WTC11 (cell line): ENCODE measurements at regions of chr2 and their contacts with region 1.

Region 1: GRCh38 chr2:100321181-100321865 is 978 bp downstream of the LONRF2 start:
- DNase-seq: peak; percentile 75
- ATAC-seq: peak; percentile 89
- H3K4me3 Mint-ChIP-seq: peak overlapping the region; percentile 55
- H3K27ac Mint-ChIP-seq: no peak overlapping the region
- H3K4me1 Mint-ChIP-seq: peaks cover 5% of the 10 kb centered on the region
- H3K27me3 Mint-ChIP-seq: peaks cover 61% of the 10 kb centered on the region
- CTCF ChIP-seq: no peak

Region 2: DNA sequence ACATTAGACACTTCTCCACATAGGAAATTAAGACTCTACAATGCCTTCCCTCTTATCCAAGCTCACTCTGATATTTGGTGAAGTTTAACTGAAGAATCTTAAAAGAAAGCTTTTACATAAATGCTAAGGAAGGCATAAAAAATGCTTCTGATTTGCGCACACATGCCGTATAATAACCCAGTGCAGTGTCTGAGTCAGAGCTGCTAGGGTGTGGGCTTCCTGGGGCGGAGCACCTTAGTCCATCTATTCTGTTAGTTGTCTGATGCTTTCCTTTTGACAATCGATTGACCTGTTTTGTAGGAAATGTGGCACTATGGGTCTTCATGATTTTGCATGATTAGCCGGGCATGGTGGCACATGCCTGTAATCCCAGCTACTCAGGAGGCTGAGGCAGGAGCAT is 410.4 kb before region 1 on chr2:
- CTCF ChIA-PET with region 1: no interaction called
- POLR2A ChIA-PET with region 1: interaction called, 10 read pairs
- DNase-seq: no peak
- ATAC-seq: no peak
- H3K4me3 Mint-ChIP-seq: no peak overlapping the region
- H3K27ac Mint-ChIP-seq: no peak overlapping the region
- H3K4me1 Mint-ChIP-seq: peaks cover 5% of the 10 kb centered on the region; the same call in 1 of the 2 replicates
- H3K27me3 Mint-ChIP-seq: no peaks in the 10 kb centered on the region
- CTCF ChIP-seq: no peak

Region 3: DNA sequence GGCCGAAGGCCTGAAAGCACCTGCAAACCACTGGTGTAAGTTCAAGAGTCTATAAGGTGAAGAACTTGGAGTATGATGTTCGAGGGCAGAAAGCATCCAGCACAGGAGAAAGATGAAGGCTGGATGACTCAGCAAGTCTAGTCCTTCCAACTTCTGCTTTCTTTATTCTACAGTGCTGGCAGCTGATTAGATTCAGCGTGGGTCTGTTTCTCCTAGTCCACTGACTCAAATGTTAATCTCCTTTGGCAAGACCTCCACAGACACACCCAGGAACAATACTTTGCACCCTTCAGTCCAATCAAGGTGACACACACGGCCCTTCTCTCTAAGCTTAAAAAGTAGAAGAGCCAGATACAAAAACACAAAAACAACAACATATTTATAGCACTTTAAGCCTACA is 192.3 kb after region 1 on chr2:
- CTCF ChIA-PET with region 1: no interaction called
- POLR2A ChIA-PET with region 1: no interaction called
- DNase-seq: no peak
- ATAC-seq: no peak
- H3K4me3 Mint-ChIP-seq: no peak overlapping the region
- H3K27ac Mint-ChIP-seq: no peak overlapping the region
- H3K4me1 Mint-ChIP-seq: no peaks in the 10 kb centered on the region
- H3K27me3 Mint-ChIP-seq: peaks cover 4% of the 10 kb centered on the region; the same call in 1 of the 2 replicates
- CTCF ChIP-seq: no peak